Cardiac septum (tissue), 1 donor: ENCODE measurements at regions of chr22 and their contacts with region 1.

Region 1: DNA sequence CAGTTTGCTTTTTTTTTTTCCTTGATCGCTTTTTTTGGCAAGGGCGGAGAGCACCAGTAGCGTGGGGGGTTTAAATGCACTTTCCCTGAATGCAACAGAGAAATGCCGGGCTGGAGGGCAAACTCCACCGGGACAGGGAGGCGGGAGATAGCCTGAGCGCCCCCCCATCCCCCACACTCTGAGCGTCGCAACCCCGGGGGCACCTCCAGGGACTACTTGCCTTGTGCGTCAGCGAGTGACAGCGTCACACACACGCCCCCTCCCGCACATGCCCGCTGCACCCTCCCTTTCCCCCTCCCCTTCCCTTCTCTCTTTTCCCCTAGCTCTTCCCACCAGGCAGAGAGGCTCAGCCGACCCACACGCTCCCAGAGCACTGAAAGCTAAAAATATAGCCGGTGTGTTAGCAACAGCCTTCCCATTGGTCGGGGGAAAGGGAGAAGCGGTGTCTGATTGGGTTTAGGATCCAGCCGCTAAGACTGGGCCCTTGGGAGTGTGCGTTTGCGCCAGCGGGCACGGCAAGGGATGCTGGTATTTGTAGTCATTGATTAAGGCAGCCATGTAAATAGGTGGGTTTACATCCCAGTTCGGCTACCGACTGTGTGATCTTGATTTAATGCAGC is 1.7 kb upstream of the TOB2 start:
- DNase-seq: peak; percentile 96

Region 2: DNA sequence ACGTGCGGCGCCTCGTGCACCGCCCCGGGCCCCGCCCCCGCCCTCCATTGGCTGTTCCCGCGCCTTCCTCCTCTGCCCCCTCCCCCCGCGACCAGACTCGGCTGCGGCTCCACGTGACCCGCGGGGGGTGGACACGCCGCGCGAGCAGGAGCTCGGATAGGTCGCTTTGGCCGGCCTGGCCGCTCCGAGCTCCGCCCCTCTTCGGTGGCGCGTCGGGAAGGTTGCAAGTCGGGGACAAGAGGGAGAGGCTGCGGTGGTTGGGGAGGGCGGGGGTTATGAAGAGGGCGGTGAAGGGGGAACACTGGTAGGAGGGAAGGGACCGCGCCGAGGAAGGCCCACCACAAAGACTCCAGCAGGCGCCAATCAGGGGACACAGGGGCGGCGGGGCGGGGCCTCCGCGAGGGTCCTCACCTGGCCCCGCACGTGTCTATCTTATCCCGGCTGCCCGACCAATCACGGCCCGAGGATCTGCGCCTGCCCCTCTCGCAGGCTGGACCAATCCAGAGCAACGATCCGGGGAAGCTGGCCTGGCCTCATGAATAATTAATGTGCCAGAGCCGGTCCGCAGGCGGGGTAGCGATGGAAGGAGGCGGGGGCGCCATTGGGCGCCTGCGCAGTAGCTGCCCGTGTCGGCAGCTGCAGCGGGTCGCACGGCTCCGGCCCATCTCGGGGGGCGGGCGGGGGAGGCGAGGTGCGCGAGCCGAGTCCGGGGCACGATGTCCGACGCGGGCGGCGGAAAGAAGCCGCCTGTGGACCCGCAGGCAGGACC is 66.8 kb before region 1 on chr22 and contains the start of gene TEF:
- intact Hi-C with region 1: loop called (anchors 1 kb)
- DNase-seq: peak; percentile 98
- total RNA-seq, gene TEF: 14.0 TPM

Region 3: GRCh38 chr22:41417622-41418390 is 30.5 kb before region 1 on chr22:
- intact Hi-C with region 1: loop called (anchors 2 kb)
- DNase-seq: peak; percentile 94

Region 4: DNA sequence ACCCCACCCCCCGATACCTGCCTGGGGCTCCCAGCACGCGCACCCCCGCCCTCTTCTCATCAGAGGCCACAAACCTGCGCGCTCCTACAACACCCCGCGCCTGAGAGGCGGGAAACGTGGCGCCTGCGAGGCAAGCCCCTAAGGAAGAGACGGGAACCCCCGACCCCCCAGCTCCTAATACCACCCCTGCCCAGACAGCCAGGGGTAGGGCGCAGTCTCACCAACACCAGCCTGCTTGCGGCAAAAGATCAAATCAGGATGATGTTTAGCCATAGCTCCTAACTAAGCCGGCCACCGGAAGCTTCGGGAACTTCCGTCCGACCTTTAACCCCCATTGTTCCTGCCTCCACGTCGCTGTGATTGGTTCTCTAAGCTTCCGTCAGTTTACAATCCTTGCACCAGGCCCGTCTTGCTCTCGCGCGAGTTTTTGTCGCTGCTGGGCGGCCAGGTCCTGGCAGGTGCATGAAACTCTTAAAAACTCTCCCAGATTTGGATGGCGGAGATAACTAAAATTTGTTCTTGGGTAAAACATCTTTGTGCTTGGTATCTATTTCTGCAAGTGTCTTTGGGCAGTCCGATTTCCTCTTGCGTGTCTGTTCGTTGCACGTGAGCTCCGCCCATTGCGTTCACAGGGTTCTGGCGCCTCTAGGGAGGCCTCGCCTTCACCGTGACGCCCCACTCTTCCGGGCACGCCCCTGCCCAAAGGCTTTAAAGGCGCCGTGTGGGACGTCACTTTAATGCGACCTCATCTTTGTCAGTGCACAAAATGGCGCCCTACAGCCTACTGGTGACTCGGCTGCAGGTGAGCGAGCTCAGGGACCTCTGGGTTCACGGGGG is 20.3 kb after region 1 on chr22 and contains the starts of genes ACO2 and PHF5A:
- intact Hi-C with region 1: loop called (anchors 1 kb)
- DNase-seq: peak; percentile 98
- total RNA-seq, gene ACO2: 662 TPM
- total RNA-seq, gene PHF5A: 22.0 TPM

Region 5: GRCh38 chr22:41642331-41643110 is 194.2 kb after region 1 on chr22:
- intact Hi-C with region 1: no loop called
- DNase-seq: no peak